Heart right ventricle (tissue), 16 donors: ENCODE measurements at regions of chr17 and their contacts with region 1.

Region 1: GRCh38 chr17:27879987-27880608 is 13.1 kb downstream of the LYRM9 start:
- DNase-seq: peak; percentile 71 to 80
- ATAC-seq: peak; percentile 86 to 95 (median 92)
- H3K4me3 ChIP-seq: no peak overlapping the region
- H3K27ac ChIP-seq: no peak overlapping the region
- H3K4me1 ChIP-seq: peaks cover 0 to 21% (median 4%) of the 10 kb centered on the region in 9 donors
- H3K27me3 ChIP-seq: no peaks in the 10 kb centered on the region
- CTCF ChIP-seq: peak; percentile 67 to 91 (median 87)

Region 2: DNA sequence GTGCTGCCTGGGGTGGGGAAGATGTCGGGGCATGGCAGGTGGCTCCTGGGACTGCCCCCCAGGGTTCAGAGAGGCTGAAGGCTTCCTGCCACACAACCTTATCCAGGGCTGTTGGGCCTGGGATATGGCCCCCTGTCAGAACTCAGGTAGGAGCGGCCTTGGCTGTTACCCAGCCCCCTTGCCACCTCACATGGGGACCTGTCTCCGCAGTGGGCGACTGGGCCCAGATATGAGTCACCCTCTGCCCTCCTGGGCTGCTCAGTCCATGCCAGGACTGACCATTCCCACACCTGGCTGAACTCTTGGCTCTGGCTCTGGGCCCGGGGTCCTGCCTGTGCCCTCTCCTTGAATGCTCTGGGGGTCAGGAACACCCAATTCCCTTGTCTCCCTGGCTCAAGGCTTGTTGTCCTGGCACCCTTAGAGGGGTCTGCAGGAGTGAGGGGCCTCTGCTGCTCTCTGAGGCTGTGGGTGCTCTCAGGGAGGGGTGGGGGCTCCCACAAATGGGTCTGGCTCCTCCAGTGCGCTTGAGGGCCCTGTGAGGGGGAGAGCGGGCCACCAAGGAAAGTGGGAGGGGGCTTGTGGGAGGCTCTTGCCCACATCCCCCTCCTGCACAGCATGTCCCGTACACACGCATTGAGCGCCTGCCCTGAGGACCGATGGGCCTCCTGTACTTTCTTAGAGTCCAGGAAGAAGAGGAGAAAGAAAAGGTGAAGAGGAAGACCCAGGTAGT is 213.1 kb before region 1 on chr17:
- intact Hi-C with region 1: loop called in 1 of 10 experiments (anchors 10 kb)
- DNase-seq: no peak
- ATAC-seq: no peak
- H3K4me3 ChIP-seq: no peak overlapping the region
- H3K27ac ChIP-seq: no peak overlapping the region
- H3K4me1 ChIP-seq: no peaks in the 10 kb centered on the region
- H3K27me3 ChIP-seq: no peaks in the 10 kb centered on the region
- CTCF ChIP-seq: no peak

Region 3: GRCh38 chr17:27760069-27760885 is 119.8 kb before region 1 on chr17:
- intact Hi-C with region 1: loop called in 9 of 10 experiments (anchors 1 to 5 kb)
- DNase-seq: peak; percentile 58 to 75
- ATAC-seq: peak in 7 of 8 donors; percentile 39 to 69 (median 59)
- H3K4me3 ChIP-seq: no peak overlapping the region
- H3K27ac ChIP-seq: no peak overlapping the region
- H3K4me1 ChIP-seq: no peaks in the 10 kb centered on the region
- H3K27me3 ChIP-seq: no peaks in the 10 kb centered on the region
- CTCF ChIP-seq: peak; percentile 83 to 96 (median 92)

Region 4: DNA sequence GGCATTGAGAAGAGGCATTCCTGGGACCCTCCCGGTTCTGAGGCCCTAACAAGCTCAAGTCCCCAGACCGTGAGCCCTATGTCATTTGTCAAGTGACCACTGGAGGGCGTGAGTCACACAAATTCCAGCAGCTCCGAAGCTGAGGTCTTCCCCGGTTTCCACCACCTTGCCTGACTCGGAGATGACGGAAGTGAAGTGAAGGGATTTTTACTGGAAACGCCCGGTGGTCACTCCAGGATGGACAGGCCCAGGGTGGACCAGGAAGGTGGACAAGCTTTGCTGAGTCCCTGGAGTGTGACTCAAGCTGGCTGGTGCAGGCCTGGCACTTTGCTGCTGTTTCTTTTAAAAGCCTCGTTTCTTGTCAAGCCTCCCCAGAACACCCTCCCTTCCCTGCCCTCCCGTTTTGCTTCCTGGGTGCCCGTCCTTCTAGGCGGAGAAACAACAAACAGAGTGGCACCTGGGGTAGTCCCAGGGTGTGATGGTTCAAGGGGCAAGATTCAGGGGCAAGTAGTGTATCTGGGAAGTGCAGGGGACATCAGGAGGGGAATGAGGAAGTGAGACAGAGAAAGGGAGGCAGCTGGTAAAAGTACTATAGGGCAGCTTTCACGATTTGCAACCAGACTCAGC is 74.5 kb before region 1 on chr17:
- intact Hi-C with region 1: loop called (anchors 1 to 5 kb)
- DNase-seq: peak; percentile 70 to 88
- ATAC-seq: peak; percentile 87 to 93 (median 91)
- H3K4me3 ChIP-seq: peak overlapping the region in 9 of 10 donors; percentile 4 to 49 (median 41)
- H3K27ac ChIP-seq: peak overlapping the region in 4 of 10 donors; percentile 22 to 82 (median 34)
- H3K4me1 ChIP-seq: peaks cover 0 to 30% (median 11%) of the 10 kb centered on the region in 9 donors
- H3K27me3 ChIP-seq: peaks cover 0 to 6% (median 0%) of the 10 kb centered on the region in 7 donors
- CTCF ChIP-seq: peak; percentile 77 to 90 (median 88)

Region 5: DNA sequence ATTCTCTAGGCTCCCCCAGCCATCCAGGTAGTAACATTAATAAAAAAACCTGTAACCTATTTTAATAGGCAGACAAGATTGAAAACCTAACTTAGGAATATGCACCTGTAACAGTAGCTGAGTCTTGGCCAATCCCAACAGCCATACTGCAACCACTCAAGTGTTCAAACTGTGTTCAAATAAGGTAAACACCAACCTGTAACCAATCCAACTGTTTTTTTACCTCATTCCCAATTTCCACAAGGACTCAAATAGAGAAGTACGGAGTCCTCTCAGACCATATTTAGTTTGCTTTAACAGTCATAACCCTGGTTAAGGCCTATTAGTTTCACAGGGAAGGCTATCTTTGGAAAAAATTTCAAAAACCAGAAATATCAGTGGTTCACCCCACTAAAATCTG is 39.4 kb before region 1 on chr17:
- intact Hi-C with region 1: loop called in 1 of 10 experiments (anchors 5 kb)
- DNase-seq: no peak
- ATAC-seq: no peak
- H3K4me3 ChIP-seq: no peak overlapping the region
- H3K27ac ChIP-seq: no peak overlapping the region
- H3K4me1 ChIP-seq: no peaks in the 10 kb centered on the region
- H3K27me3 ChIP-seq: no peaks in the 10 kb centered on the region
- CTCF ChIP-seq: no peak